Common myeloid progenitor, CD34-positive (primary cell): ENCODE measurements at regions of chr7 and their contacts with region 1.

Region 1: DNA sequence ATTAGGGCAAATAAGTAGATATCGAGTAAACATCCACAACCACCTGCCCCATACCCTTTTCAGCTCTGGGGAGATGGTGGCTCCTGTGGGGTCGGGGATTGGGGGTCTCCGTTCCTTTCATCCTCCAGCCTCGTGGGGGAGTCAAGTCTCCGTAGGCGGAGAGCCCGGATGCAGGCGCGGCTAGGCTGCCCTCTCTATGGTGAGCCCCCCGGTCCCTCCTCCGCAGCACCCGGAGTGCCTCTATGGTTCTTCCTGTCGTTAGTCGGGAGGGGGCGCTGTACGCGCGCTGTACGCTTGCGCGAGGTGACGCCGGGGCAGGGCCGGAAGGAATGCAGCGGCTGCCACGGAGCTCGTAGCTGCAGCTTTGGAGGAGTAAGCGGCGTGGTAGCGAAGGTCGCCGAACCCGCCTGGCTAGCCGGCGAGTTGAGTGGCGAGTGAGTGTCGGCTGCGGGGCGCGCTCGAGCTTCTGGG is 14.8 kb upstream of the MMD2 start:
- DNase-seq: peak; percentile 95 to 97 (median 97)
- H3K4me3 ChIP-seq: peak overlapping the region; percentile 49 to 86 (median 75)
- H3K27ac ChIP-seq: peak overlapping the region in 1 of 2 experiments; percentile 76
- H3K4me1 ChIP-seq: peaks cover 0 to 10% (median 5%) of the 10 kb centered on the region in 4 experiments
- H3K27me3 ChIP-seq: no peaks in the 10 kb centered on the region

Region 2: GRCh38 chr7:5083311-5083711 is 109.5 kb after region 1 on chr7:
- CTCF ChIA-PET with region 1: interaction called, 10 read pairs
- POLR2A ChIA-PET with region 1: no interaction called
- DNase-seq: peak in 1 of 3 donors; percentile 35
- H3K4me3 ChIP-seq: no peak overlapping the region
- H3K27ac ChIP-seq: no peak overlapping the region
- H3K4me1 ChIP-seq: peaks cover 0 to 9% (median 2%) of the 10 kb centered on the region in 4 experiments
- H3K27me3 ChIP-seq: peaks cover 0 to 18% (median 2%) of the 10 kb centered on the region in 5 experiments

Region 3: DNA sequence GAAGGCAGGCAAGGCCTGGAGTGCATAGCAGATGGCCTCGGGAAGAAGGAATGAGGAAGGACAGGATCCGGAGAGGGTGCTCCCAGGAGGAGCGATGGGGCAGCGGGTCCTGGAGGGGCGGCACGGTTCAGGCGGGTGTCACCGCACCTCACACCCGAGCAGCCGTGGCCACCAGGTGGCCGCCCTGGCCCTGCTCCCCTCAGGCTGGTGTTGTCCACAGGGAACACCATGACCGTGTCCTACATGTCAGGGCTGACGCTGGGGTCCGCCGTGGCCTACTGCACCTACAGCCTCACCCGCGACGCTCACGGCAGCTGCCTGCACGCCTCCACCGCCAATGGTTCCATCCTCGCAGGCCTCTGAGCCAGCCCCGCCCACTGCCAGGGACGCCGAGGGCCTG is 328.8 kb after region 1 on chr7:
- CTCF ChIA-PET with region 1: no interaction called
- POLR2A ChIA-PET with region 1: no interaction called
- DNase-seq: peak in 1 of 3 donors; percentile 25
- H3K4me3 ChIP-seq: no peak overlapping the region
- H3K27ac ChIP-seq: no peak overlapping the region
- H3K4me1 ChIP-seq: no peaks in the 10 kb centered on the region
- H3K27me3 ChIP-seq: peaks cover 0 to 6% (median 2%) of the 10 kb centered on the region in 5 experiments